ENCODE measurements at regions of chr16 and their contacts with region 1.

Region 1: DNA sequence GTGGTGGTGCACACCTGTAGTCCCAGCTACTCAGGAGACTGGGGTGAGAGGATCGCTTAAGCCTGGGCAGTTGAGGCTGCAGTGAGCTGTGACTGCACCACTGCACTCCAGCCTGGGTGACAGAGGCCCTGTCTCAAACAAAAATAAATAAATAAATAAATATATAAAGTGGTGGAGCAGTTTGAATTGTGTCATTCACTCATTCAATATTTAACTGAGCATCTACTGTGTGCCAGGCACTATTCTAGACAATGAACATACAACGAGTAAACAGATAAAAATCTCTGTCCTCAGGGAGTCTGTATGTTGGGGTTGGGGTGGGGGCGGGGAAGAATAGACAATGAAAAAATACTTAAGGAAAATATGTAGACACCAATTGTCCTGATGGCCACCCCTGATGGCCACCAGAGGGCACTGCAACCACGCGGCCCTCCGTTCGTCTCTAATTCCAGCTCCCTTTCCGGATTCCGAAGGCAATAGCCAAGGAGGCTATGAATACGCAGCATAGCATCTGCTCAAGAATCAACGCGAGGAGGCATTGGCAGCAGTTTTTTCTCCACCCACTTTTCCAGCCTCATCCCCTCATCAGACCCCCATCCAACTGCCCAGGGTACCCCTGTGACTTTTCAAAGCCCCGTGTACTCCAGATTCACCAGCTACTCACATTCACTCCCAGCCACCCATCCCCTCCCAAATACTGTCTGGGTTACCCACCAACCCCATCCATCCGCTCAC is 21.4 kb downstream of the QPRT start:
- DNase-seq: peak; percentile 55 to 89 (median 75)
- ATAC-seq: no peak
- H3K4me3 ChIP-seq: no peak overlapping the region
- H3K4me3 Mint-ChIP-seq: peak overlapping the region; percentile 52
- H3K27ac ChIP-seq: peak overlapping the region in 1 of 2 experiments; percentile 86
- H3K27ac Mint-ChIP-seq: peak overlapping the region; percentile 92
- H3K4me1 ChIP-seq: peaks cover 32% of the 10 kb centered on the region
- H3K4me1 Mint-ChIP-seq: peaks cover 37% of the 10 kb centered on the region
- H3K27me3 ChIP-seq: no peaks in the 10 kb centered on the region
- H3K27me3 Mint-ChIP-seq: no peaks in the 10 kb centered on the region
- CTCF ChIP-seq: peak; percentile 90

Region 2: DNA sequence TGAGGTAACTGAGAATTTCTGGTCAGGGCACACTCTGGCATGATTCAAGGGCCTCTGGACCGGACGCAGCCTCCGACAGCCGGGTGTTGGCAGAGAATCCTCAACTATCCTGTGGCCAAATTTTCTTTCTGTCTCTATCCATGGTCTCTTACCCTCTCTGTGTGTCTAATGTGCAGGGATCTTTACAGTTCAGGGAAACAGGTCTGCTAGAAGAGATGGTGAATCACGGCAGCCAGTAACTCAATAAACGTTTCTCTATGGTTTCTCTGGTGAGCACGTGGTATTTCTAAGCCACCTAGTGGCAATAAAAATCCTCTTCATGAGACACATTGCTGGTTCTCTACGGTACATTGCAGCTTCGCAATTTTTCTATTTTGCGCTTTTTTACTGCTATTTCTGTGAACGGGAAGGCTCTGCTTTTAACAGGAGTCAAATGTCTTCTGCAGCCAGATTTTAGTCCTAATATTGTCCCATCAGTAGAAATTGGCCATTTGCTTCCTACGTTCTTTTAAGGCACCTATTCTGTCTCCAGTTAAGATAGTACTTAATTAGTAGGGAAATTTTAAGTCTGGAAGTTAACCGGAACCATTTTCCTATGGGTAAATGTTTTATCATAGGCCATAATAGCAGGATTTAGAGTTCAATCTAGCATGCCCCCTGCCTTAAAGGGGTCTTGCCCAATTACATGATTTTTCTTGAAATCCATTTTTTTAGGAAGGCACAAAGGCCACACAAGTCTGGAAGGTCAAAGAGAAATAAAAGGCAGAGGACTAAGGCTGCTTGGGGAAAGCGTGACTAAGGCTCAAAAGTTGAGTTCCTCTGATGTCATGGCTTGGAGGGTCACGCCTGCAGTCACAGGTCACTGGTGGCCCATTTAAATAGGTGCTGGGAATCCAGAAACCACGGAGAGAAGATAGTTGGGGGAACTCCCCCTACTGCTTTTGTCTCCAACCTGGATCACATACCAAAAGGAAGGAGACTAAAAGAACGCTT is 10.1 kb after region 1 on chr16:
- CTCF ChIA-PET with region 1: interaction called, 89 read pairs
- POLR2A ChIA-PET with region 1: interaction called, 14 read pairs
- intact Hi-C with region 1: loop called (anchors 1 kb)
- DNase-seq: peak in 7 of 9 experiments; percentile 22 to 84 (median 47)
- ATAC-seq: peak; percentile 100
- H3K4me3 ChIP-seq: no peak overlapping the region
- H3K4me3 Mint-ChIP-seq: no peak overlapping the region
- H3K27ac ChIP-seq: no peak overlapping the region
- H3K27ac Mint-ChIP-seq: peak overlapping the region; percentile 79
- H3K4me1 ChIP-seq: peaks cover 10% of the 10 kb centered on the region
- H3K4me1 Mint-ChIP-seq: peaks cover 11% of the 10 kb centered on the region
- H3K27me3 ChIP-seq: no peaks in the 10 kb centered on the region
- H3K27me3 Mint-ChIP-seq: no peaks in the 10 kb centered on the region
- CTCF ChIP-seq: peak; percentile 76

Region 3: DNA sequence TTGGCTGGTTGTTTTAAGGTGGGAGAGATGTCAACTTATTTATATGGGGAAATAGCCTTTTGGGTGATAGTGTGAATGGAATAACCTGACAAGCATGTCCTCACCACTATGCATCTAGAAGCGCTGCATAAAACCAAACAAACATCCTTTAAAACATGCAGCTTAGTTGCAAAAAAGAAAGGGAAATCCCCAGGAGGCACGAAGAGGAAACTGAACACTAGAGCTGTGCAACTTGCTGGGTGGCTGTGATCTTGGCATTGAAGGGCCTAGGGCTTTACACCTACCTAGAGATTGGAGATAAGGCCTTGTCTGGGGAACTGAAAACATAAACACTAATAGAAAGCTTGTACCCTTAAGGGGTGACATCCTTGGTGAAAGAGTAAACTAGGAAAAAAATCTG is 38.1 kb after region 1 on chr16:
- CTCF ChIA-PET with region 1: interaction called, 20 read pairs
- POLR2A ChIA-PET with region 1: interaction called, 24 read pairs
- intact Hi-C with region 1: no loop called
- DNase-seq: peak in 8 of 9 experiments; percentile 41 to 92 (median 65)
- ATAC-seq: peak; percentile 92
- H3K4me3 ChIP-seq: peak overlapping the region in 1 of 2 experiments; percentile 21
- H3K4me3 Mint-ChIP-seq: peak overlapping the region; percentile 53
- H3K27ac ChIP-seq: peak overlapping the region; percentile 36 to 67
- H3K27ac Mint-ChIP-seq: peak overlapping the region; percentile 87
- H3K4me1 ChIP-seq: peaks cover 74% of the 10 kb centered on the region
- H3K4me1 Mint-ChIP-seq: peaks cover 77% of the 10 kb centered on the region
- H3K27me3 ChIP-seq: no peaks in the 10 kb centered on the region
- H3K27me3 Mint-ChIP-seq: no peaks in the 10 kb centered on the region
- CTCF ChIP-seq: no peak

Region 4: DNA sequence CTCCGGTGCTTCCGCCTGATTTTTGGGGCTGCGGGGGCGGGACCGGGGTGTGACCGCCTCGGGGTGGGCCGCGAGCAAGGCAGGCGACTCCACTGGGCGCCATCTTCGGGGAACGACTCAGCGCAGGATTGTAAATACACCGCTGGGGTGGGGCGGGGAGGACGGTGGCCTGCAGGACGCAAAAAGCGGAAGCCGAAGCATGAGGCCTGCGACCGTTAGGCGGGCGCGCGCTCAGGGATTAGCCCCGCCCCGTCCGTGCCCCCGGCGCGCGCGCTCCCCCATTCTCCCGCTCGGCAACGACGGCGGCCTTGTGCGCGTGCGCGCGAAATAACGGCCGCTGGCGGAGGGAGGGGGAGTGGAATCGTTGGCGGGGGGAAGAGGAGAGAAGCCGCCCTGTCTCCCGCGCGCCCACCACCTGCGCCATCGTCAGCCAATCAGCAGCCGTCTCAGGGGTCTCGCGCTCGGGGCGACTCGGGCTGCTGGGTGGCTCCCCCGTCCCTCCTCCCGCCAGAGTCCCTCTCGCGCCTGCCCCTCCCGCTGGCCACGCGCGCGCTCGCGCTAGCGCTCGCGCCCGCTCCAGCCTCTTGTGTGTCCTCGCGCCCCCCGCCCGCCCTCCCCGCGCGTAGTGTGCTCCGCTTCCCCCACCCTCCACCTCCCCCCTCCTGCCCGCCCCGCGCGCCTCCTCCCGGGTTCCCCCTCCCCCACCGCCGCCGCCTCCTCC is 105.1 kb after region 1 on chr16:
- CTCF ChIA-PET with region 1: interaction called, 29 read pairs
- POLR2A ChIA-PET with region 1: interaction called, 48 read pairs
- intact Hi-C with region 1: loop called (anchors 1 kb)
- DNase-seq: peak; percentile 95 to 99 (median 98)
- ATAC-seq: peak; percentile 60
- H3K4me3 ChIP-seq: peak overlapping the region; percentile 70 to 82
- H3K4me3 Mint-ChIP-seq: peak overlapping the region; percentile 99
- H3K27ac ChIP-seq: peak overlapping the region; percentile 86 to 87
- H3K27ac Mint-ChIP-seq: peak overlapping the region; percentile 100
- H3K4me1 ChIP-seq: peaks cover 42% of the 10 kb centered on the region
- H3K4me1 Mint-ChIP-seq: peaks cover 39% of the 10 kb centered on the region
- H3K27me3 ChIP-seq: no peaks in the 10 kb centered on the region
- H3K27me3 Mint-ChIP-seq: no peaks in the 10 kb centered on the region
- CTCF ChIP-seq: no peak

Region 5: DNA sequence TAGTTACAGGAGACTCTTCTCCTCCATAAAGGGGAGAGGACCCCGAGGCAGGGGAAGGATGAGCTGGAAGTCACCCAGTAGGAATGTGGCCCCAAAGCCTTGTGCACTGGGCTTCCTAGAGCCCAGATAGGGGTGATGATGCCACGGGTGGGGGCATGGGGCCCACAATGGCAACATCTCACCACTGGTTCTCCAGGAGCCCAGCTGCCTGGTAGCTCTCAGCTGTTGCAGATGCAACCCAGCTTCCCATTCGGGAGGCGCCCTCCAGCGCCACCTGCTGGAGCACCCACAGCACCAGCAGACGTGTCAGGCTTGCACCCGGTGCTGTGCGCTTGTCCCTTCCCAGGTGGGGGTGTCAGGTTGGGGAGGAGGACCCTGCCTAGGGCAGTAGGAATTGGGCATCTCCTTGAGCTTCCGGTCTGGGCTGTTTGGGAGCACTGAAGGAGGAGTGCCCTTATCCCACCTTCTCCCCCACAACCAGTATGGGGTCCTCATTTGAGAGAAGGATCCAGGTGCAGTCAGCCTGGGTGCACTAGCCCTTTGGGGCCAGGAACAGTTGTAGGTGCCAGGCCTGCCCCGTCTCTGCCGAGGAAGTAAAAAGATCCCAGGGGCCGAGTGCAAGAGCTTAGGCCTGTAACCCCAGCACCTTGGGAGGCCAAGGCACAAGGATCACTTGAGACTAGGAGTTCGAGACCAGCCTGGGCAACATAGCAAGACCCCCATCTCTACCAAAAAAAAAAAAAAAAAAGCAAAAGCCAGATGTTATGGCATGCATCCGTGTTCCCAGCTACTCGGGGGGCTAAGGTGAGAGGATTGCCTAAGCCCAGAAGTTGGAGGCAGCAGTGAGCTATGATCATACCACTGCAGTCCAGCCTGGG is 148.2 kb after region 1 on chr16:
- CTCF ChIA-PET with region 1: interaction called, 113 read pairs
- POLR2A ChIA-PET with region 1: interaction called, 10 read pairs
- intact Hi-C with region 1: loop called (anchors 1 kb)
- DNase-seq: peak; percentile 62 to 92 (median 84)
- ATAC-seq: peak; percentile 98
- H3K4me3 ChIP-seq: no peak overlapping the region
- H3K4me3 Mint-ChIP-seq: no peak overlapping the region
- H3K27ac ChIP-seq: no peak overlapping the region
- H3K27ac Mint-ChIP-seq: no peak overlapping the region
- H3K4me1 ChIP-seq: no peaks in the 10 kb centered on the region
- H3K4me1 Mint-ChIP-seq: peaks cover 3% of the 10 kb centered on the region
- H3K27me3 ChIP-seq: no peaks in the 10 kb centered on the region
- H3K27me3 Mint-ChIP-seq: no peaks in the 10 kb centered on the region
- CTCF ChIP-seq: peak; percentile 78

Region 6: GRCh38 chr16:30018731-30019158 is 318.3 kb after region 1 on chr16:
- CTCF ChIA-PET with region 1: interaction called, 10 read pairs
- POLR2A ChIA-PET with region 1: no interaction called
- intact Hi-C with region 1: loop called in 1 of 2 experiments (anchors 2 kb)
- DNase-seq: no peak
- ATAC-seq: no peak
- H3K4me3 ChIP-seq: no peak overlapping the region
- H3K4me3 Mint-ChIP-seq: no peak overlapping the region
- H3K27ac ChIP-seq: no peak overlapping the region
- H3K27ac Mint-ChIP-seq: no peak overlapping the region
- H3K4me1 ChIP-seq: peaks cover 7% of the 10 kb centered on the region
- H3K4me1 Mint-ChIP-seq: peaks cover 5% of the 10 kb centered on the region
- H3K27me3 ChIP-seq: peaks cover 0 to 3% of the 10 kb centered on the region in 2 experiments
- H3K27me3 Mint-ChIP-seq: no peaks in the 10 kb centered on the region
- CTCF ChIP-seq: no peak

Region 7: DNA sequence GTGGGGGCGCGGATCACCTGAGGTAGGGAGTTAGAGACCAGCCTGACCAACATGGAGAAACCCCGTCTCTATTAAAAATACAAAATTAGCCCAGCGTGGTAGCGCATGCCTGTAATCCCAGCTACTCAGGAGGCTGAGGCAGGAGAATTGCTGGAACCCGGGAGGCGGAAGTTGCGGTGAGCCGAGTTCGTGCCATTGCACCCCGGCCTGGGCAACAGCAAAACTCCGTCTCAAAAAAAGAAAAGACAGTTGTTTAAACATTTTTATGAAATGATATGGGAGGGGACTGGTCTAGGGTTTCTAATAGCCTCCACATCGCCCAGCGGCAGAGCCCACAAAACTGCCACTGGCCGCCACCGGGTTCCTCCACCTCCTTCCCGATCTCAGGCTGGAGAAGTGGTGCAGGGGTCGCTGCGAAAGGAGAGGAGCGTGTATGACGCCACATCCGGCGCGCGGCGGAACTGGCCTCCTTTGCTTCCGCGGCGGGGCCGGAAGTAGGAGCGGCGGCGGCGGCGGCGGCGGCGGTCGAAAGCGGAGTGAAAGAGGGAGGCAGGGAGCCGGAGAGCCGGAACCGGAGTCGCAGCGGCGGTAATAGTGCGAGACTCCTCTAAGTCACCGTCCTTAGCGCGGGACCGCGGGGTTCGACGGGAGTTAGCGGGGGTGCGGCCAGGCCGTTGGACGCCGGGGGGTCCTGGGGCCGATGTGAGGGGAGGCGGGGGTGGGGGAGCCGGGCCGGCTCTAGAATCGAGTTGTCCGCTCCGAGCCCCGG is 375.3 kb after region 1 on chr16 and contains the start of gene PPP4C:
- CTCF ChIA-PET with region 1: no interaction called
- POLR2A ChIA-PET with region 1: no interaction called
- intact Hi-C with region 1: no loop called
- DNase-seq: peak; percentile 65 to 94 (median 89)
- ATAC-seq: peak; percentile 88
- H3K4me3 ChIP-seq: peak within 1 kb of the TSS; percentile 96 to 99
- H3K4me3 Mint-ChIP-seq: peak within 1 kb of the TSS; percentile 93
- H3K27ac ChIP-seq: peak within 1 kb of the TSS; percentile 82 to 92
- H3K27ac Mint-ChIP-seq: peak within 1 kb of the TSS; percentile 96
- H3K4me1 ChIP-seq: peaks cover 31% of the 10 kb centered on the region
- H3K4me1 Mint-ChIP-seq: peaks cover 38% of the 10 kb centered on the region
- H3K27me3 ChIP-seq: no peaks in the 10 kb centered on the region
- H3K27me3 Mint-ChIP-seq: no peaks in the 10 kb centered on the region
- CTCF ChIP-seq: no peak
- total RNA-seq, gene PPP4C: 89.4 to 97.4 TPM